Head of caudate nucleus (tissue), 42 donors: ENCODE measurements at regions of chr5 and their contacts with region 1.

Region 1: DNA sequence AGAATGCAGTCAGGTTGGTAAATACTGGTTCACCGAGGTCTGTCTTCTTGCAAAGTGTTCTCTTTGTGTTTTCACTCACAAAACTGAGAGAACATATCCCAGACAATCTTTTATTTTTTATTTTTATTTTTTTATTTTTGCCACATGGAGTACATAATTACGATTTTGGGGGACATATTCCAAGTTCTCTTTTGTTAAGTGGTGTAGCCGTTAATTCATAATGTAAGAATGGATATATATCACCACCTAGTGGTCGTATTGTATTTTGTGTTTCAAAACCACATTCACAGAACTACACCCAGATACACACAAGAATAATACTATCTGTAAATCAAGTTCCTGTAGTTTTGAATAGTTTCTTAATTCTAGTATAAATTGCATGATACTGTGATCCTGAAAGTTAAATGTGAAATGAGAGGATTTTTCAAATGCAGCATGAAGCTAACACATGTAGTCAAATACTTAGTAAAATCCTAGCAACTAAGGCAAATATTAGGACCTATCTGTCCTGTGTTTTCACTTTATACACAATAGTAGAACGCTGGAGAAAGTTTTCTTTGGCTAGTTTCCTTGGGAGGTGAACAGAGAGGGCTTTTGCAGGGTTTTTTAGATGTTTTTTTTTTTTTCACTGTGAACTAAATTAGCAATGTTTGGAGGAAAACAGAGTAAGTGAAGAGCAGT is 92.7 kb downstream of the VCAN start:
- DNase-seq: no peak

Region 2: DNA sequence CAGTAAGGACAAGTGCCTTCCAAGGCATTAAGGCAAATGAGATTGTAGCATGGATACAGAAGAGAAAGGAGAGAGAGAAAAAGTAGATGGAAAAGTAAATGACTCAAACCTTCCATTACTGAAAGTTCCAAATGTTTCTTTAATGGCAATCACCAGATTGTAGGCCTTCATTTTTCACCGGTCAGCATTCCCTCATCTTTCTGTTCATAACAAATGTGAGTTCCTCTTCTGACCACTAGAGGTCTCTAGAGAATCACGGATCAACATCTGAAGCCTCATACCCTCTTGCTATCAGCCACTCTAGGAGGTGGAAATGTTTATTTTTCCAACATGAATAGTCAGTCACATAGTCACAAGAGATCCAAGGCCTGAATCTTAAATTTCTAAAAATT is 1212.5 kb before region 1 on chr5:
- intact Hi-C with region 1: loop called (anchors 5 kb)
- DNase-seq: peak in 10 of 42 donors; percentile 23 to 73 (median 38)

Region 3: DNA sequence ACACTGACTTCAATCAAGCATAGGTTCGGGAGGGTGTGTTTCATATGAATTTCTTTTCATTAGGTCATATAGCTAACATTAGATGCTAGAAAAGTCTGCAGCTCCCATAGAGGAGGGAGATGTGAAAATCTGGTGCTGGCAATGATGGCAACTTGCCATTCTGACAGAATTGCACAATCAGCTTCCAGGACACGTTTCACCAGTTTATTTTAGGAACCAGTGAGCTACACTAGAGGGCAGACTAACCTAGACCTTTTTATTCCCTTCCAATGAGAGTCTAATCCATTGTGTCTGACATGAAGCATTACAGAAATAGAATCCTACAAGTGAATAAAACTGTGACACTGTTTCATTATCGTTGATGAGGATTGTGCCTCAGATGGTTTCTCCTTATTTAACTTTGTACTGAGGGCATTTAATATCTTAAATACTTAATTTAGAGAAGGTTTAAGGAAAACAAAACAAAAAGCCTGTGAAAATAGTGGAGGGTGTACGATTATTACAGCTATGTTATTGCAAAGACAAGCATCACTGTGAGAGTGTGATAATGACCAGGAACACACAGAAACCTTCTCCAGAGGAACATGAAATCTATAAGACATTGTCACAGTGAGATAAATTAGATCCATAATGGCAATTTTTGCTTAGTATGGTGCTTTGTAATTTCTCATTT is 922.7 kb before region 1 on chr5:
- intact Hi-C with region 1: loop called (anchors 5 kb)
- DNase-seq: peak in 41 of 42 donors; percentile 11 to 89 (median 66)

Region 4: GRCh38 chr5:83473346-83474163 is 90.7 kb before region 1 on chr5:
- intact Hi-C with region 1: loop called (anchors 5 kb)
- DNase-seq: peak; percentile 75 to 93 (median 85)